CD8-positive, alpha-beta T cell (primary cell): ENCODE measurements at regions of chr3 and their contacts with region 1.

Region 1: DNA sequence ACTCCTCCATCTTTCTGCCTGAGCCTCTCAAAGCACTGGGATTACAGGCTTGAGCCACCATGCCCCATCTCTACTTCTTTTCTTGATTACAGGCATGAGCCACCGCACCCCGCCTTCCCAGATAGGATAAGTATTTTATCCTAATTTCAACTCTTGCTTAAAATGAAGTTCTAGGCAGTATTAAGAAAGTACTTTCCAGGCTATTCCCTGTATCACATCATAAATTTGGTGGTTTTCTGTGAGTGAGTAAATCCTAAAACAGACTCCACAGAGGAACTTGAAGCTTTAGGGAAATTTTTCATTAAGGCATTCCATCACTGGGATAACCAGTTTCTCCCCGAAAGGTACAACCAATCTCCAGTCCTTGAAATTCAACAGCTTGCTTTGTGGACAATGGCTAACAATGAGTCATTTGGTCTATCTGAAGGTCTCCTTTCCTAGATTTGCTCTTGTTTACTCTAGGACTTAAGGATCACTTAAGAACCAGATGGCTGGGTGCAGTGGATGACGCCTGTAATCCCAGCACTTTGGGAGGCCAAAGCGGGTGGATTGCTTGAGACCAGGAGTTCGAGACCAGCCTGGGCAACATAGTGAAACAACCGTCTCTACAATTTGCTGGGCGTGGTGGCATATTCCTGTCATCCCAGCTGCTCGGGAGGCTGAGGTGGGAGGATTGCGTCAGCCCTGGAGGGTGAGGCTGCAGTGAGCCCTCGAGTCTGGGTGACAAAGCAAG is 49.7 kb upstream of the SKIL start:
- DNase-seq: no peak
- ATAC-seq: no peak
- H3K4me3 ChIP-seq: no peak overlapping the region
- H3K4me3 Mint-ChIP-seq: no peak overlapping the region
- H3K27ac ChIP-seq: no peak overlapping the region
- H3K27ac Mint-ChIP-seq: no peak overlapping the region
- H3K4me1 ChIP-seq: no peaks in the 10 kb centered on the region
- H3K4me1 Mint-ChIP-seq: no peaks in the 10 kb centered on the region
- H3K27me3 ChIP-seq: no peaks in the 10 kb centered on the region
- H3K27me3 Mint-ChIP-seq: no peaks in the 10 kb centered on the region
- CTCF ChIP-seq: no peak

Region 2: DNA sequence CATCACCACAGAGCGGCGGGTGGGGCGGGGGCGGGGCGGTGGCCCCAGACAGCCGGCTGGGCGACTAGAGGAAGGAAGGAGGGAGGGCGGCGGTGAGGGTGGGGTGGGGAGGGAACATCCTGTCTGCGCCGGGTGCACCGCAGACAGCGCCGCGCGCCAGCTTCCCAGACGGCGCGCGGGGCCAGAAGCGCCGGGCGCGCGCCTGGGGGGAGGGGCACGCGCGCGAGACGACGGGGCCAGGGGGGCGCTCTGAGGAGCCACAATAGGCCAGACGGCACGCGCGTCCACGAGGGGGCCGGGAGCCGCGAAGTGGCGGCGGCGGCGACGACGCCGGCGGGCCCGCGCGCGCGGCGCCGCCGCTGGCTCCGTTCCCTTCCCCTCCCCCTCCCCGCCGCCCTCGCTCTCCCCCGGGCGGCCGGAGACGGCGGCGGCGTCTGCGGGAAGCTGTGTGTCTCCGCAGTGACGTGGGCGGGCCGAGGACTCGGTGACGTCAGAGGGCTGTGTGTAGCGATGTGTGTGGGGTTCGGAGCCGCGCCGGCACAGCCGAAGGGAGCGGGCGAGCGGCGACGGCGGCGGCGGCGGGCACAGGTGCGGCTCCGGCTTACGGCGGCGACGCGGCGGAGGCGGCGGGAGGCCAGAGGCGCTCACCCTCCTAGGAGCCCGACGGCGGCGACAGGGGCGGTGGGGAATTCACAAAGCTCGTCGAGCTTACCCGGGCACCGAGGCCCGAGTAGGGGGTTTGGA is 49.5 kb after region 1 on chr3 and contains the start of gene SKIL:
- CTCF ChIA-PET with region 1: no interaction called
- POLR2A ChIA-PET with region 1: interaction called, 3 read pairs
- intact Hi-C with region 1: loop called (anchors 2 to 5 kb)
- DNase-seq: peak; percentile 94 to 99 (median 97)
- ATAC-seq: peak; percentile 69
- H3K4me3 ChIP-seq: peak within 1 kb of the TSS; percentile 55 to 76
- H3K4me3 Mint-ChIP-seq: peak within 1 kb of the TSS; percentile 95
- H3K27ac ChIP-seq: peak within 1 kb of the TSS; percentile 91 to 96
- H3K27ac Mint-ChIP-seq: peak within 1 kb of the TSS; percentile 99
- H3K4me1 ChIP-seq: peaks cover 24% of the 10 kb centered on the region
- H3K4me1 Mint-ChIP-seq: peaks cover 52% of the 10 kb centered on the region
- H3K27me3 ChIP-seq: no peaks in the 10 kb centered on the region
- H3K27me3 Mint-ChIP-seq: no peaks in the 10 kb centered on the region
- CTCF ChIP-seq: no peak
- total RNA-seq, gene SKIL: 160 to 177 TPM

Region 3: GRCh38 chr3:170368921-170369320 is 61.1 kb after region 1 on chr3:
- CTCF ChIA-PET with region 1: no interaction called
- POLR2A ChIA-PET with region 1: no interaction called
- intact Hi-C with region 1: loop called in 1 of 2 experiments (anchors 1 kb)
- DNase-seq: peak in 2 of 9 experiments; percentile 33 to 55
- ATAC-seq: no peak
- H3K4me3 ChIP-seq: no peak overlapping the region
- H3K4me3 Mint-ChIP-seq: no peak overlapping the region
- H3K27ac ChIP-seq: no peak overlapping the region
- H3K27ac Mint-ChIP-seq: no peak overlapping the region
- H3K4me1 ChIP-seq: peaks cover 12% of the 10 kb centered on the region
- H3K4me1 Mint-ChIP-seq: peaks cover 43% of the 10 kb centered on the region
- H3K27me3 ChIP-seq: no peaks in the 10 kb centered on the region
- H3K27me3 Mint-ChIP-seq: no peaks in the 10 kb centered on the region
- CTCF ChIP-seq: peak; percentile 56

Region 4: GRCh38 chr3:170499565-170500156 is 191.8 kb after region 1 on chr3:
- CTCF ChIA-PET with region 1: no interaction called
- POLR2A ChIA-PET with region 1: no interaction called
- intact Hi-C with region 1: loop called in 1 of 2 experiments (anchors 2 kb)
- DNase-seq: peak in 2 of 9 experiments; percentile 5 to 14
- ATAC-seq: no peak
- H3K4me3 ChIP-seq: no peak overlapping the region
- H3K4me3 Mint-ChIP-seq: no peak overlapping the region
- H3K27ac ChIP-seq: no peak overlapping the region
- H3K27ac Mint-ChIP-seq: no peak overlapping the region
- H3K4me1 ChIP-seq: no peaks in the 10 kb centered on the region
- H3K4me1 Mint-ChIP-seq: no peaks in the 10 kb centered on the region
- H3K27me3 ChIP-seq: no peaks in the 10 kb centered on the region
- H3K27me3 Mint-ChIP-seq: no peaks in the 10 kb centered on the region
- CTCF ChIP-seq: peak; percentile 18

Region 5: GRCh38 chr3:170740726-170741591 is 433.1 kb after region 1 on chr3:
- CTCF ChIA-PET with region 1: no interaction called
- POLR2A ChIA-PET with region 1: no interaction called
- intact Hi-C with region 1: no loop called
- DNase-seq: no peak
- ATAC-seq: no peak
- H3K4me3 ChIP-seq: no peak overlapping the region
- H3K4me3 Mint-ChIP-seq: no peak overlapping the region
- H3K27ac ChIP-seq: no peak overlapping the region
- H3K27ac Mint-ChIP-seq: no peak overlapping the region
- H3K4me1 ChIP-seq: no peaks in the 10 kb centered on the region
- H3K4me1 Mint-ChIP-seq: no peaks in the 10 kb centered on the region
- H3K27me3 ChIP-seq: no peaks in the 10 kb centered on the region
- H3K27me3 Mint-ChIP-seq: no peaks in the 10 kb centered on the region
- CTCF ChIP-seq: no peak

Region 6: DNA sequence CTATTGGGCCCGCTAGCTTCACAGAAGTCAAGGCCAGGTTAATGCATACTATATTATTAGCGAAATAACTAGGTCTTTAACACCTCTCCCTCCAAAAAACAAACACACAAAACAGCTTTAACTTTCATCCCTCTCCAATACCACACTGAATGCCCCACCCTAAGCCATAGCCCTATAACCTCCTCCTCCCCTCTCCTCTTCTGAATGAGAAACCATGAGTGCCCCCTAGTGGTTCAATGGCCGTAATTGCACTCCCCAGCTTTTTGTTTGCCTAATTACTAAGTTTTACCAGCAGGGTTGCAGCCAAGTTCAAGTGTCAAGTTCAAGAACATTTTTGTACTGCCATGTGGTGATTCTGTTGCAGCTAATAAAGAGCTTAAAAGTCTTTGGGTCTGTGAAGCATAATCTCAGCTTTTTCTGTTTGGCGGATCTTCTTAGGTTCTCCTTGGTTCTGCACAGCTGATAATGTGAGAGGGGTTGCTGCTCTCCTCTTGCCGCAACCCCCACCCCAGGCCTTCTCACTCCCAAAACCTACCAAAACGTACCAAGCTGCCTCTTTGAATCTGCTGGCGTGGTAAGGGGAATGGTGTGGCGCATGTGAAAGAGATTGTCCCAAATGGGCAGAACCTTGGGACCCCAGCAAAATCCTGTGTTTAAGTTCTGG is 504.2 kb after region 1 on chr3:
- CTCF ChIA-PET with region 1: interaction called, 10 read pairs
- POLR2A ChIA-PET with region 1: no interaction called
- intact Hi-C with region 1: loop called in 1 of 2 experiments (anchors 1 kb)
- DNase-seq: peak; percentile 37 to 78 (median 59)
- ATAC-seq: peak; percentile 98
- H3K4me3 ChIP-seq: no peak overlapping the region
- H3K4me3 Mint-ChIP-seq: no peak overlapping the region
- H3K27ac ChIP-seq: no peak overlapping the region
- H3K27ac Mint-ChIP-seq: no peak overlapping the region
- H3K4me1 ChIP-seq: no peaks in the 10 kb centered on the region
- H3K4me1 Mint-ChIP-seq: no peaks in the 10 kb centered on the region
- H3K27me3 ChIP-seq: peaks cover 0 to 2% of the 10 kb centered on the region in 2 experiments
- H3K27me3 Mint-ChIP-seq: peaks cover 2% of the 10 kb centered on the region
- CTCF ChIP-seq: peak; percentile 87

Region 7: DNA sequence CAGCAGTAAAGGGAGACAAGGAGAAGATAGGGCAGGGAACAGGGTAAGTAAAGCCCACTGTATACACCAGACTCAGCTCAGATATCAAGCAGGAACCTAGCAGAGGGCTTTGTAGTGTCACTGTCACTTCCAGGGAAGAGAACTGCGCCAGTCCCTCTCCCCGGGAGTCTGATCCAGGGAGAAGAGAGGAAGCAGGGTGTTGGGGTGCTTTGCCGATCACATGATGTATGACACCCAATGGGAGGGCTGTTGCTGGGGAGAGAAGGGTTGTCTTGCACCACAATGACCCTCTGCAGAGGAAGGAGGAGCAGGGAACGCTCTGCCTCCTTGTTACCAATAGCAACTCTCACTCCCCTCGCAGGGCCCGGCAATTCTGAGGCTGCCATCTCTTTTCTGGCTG is 865.9 kb after region 1 on chr3:
- CTCF ChIA-PET with region 1: no interaction called
- POLR2A ChIA-PET with region 1: no interaction called
- intact Hi-C with region 1: no loop called
- DNase-seq: no peak
- ATAC-seq: no peak
- H3K4me3 ChIP-seq: no peak overlapping the region
- H3K4me3 Mint-ChIP-seq: no peak overlapping the region
- H3K27ac ChIP-seq: no peak overlapping the region
- H3K27ac Mint-ChIP-seq: no peak overlapping the region
- H3K4me1 ChIP-seq: peaks cover 8% of the 10 kb centered on the region
- H3K4me1 Mint-ChIP-seq: peaks cover 17% of the 10 kb centered on the region
- H3K27me3 ChIP-seq: no peaks in the 10 kb centered on the region
- H3K27me3 Mint-ChIP-seq: no peaks in the 10 kb centered on the region
- CTCF ChIP-seq: no peak

Region 8: GRCh38 chr3:171526869-171527268 is 1219.0 kb after region 1 on chr3:
- CTCF ChIA-PET with region 1: no interaction called
- POLR2A ChIA-PET with region 1: no interaction called
- intact Hi-C with region 1: no loop called
- DNase-seq: no peak
- ATAC-seq: no peak
- H3K4me3 ChIP-seq: no peak overlapping the region
- H3K4me3 Mint-ChIP-seq: no peak overlapping the region
- H3K27ac ChIP-seq: no peak overlapping the region
- H3K27ac Mint-ChIP-seq: no peak overlapping the region
- H3K4me1 ChIP-seq: no peaks in the 10 kb centered on the region
- H3K4me1 Mint-ChIP-seq: no peaks in the 10 kb centered on the region
- H3K27me3 ChIP-seq: no peaks in the 10 kb centered on the region
- H3K27me3 Mint-ChIP-seq: no peaks in the 10 kb centered on the region
- CTCF ChIP-seq: no peak